Activated T-helper 2 cell treated with anti-CD3 and anti-CD28 coated beads, Interferon-gamma antibody, Interleukin-2, Interleukin-4, amounts not matched to agents 10 μg/mL and 5 μg/mL and 100 μg/mL, durations not matched to agents 14 hours and 24 hours and 36 hours (primary cell): ENCODE measurements at regions of chr3 and their contacts with region 1.

Region 1: DNA sequence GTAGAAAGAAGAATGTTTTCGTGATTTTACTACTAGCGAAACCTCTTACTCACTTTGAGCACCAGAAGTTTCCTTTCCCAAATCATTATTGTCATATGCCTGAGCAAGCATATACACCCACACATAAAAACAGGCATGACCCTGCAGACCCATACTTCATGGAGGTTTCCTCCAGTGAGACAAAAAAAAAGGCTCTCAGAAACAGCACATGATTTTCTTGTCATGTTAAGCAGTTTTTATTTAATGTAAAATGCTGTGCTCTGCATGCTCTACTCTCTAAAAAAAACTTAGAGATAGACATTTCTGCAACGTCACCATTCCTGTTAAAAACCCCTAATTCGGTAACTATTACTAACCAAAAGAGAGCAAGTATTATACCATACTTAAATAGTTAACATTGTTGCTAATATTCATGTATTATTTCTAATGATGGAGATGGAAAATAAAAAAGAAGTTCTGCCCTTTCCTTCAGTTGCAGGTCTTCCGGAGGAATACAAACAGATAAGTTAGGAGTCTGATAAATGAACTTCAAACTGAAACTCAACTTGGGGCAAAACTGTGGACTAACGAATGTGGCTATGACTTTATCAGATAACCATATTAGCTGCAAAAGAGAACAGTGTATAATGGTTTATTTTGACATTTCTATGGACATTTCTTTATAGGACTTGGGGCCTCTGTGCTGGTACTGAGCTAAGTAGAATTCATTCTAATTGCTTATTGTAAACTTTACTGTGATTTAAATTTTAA is 15.9 kb downstream of the CD200R1 start:
- DNase-seq: no peak
- H3K4me3 Mint-ChIP-seq: peak overlapping the region; percentile 73
- H3K27ac Mint-ChIP-seq: peak overlapping the region; percentile 72
- H3K4me1 Mint-ChIP-seq: peaks cover 22% of the 10 kb centered on the region
- H3K27me3 Mint-ChIP-seq: no peaks in the 10 kb centered on the region

Region 2: GRCh38 chr3:111691293-111691909 is 1267.6 kb before region 1 on chr3:
- intact Hi-C with region 1: loop called (anchors 10 kb)
- DNase-seq: no peak
- H3K4me3 Mint-ChIP-seq: no peak overlapping the region
- H3K27ac Mint-ChIP-seq: no peak overlapping the region
- H3K4me1 Mint-ChIP-seq: peaks cover 56% of the 10 kb centered on the region
- H3K27me3 Mint-ChIP-seq: no peaks in the 10 kb centered on the region

Region 3: DNA sequence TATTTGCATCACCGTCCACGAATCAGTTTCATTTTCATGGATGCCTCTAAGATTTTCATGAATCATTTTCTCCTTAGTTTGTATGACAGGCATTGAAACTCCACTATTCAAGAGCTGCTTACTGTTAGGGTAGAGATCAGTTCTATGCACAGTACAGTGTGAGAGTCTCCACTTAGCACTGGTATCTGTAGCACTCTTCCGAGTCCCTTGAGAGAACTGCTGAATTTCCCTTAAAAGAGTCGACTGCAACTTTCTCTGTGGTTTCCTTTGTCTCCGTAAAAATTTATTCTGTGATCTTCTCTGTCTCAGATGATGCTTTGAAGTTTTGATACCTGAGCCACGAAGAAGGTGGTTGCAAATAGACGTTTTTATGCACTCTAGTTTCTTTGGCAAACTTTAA is 46.6 kb after region 1 on chr3:
- intact Hi-C with region 1: loop called (anchors 1 kb)
- DNase-seq: no peak
- H3K4me3 Mint-ChIP-seq: peak overlapping the region; percentile 66
- H3K27ac Mint-ChIP-seq: peak overlapping the region; percentile 84
- H3K4me1 Mint-ChIP-seq: peaks cover 66% of the 10 kb centered on the region
- H3K27me3 Mint-ChIP-seq: no peaks in the 10 kb centered on the region

Region 4: GRCh38 chr3:113051302-113051711 is 92.3 kb after region 1 on chr3:
- intact Hi-C with region 1: no loop called
- DNase-seq: peak; percentile 79
- H3K4me3 Mint-ChIP-seq: no peak overlapping the region
- H3K27ac Mint-ChIP-seq: no peak overlapping the region
- H3K4me1 Mint-ChIP-seq: peaks cover 5% of the 10 kb centered on the region
- H3K27me3 Mint-ChIP-seq: no peaks in the 10 kb centered on the region